Psoas muscle (tissue), 8 donors: ENCODE measurements at regions of chr15 and their contacts with region 1.

Region 1: GRCh38 chr15:41972253-41973242 is at the start of gene EHD4:
- DNase-seq: peak; percentile 97 to 98
- ATAC-seq: peak; percentile 95 to 97 (median 95)
- H3K4me3 ChIP-seq: peak within 1 kb of the TSS; percentile 87
- H3K27ac ChIP-seq: peak within 1 kb of the TSS; percentile 78
- H3K4me1 ChIP-seq: peaks cover 10% of the 10 kb centered on the region
- H3K27me3 ChIP-seq: no peaks in the 10 kb centered on the region
- CTCF ChIP-seq: peak; percentile 36
- total RNA-seq, gene EHD4: 5.3 to 9.6 (median 6.3) TPM

Region 2: DNA sequence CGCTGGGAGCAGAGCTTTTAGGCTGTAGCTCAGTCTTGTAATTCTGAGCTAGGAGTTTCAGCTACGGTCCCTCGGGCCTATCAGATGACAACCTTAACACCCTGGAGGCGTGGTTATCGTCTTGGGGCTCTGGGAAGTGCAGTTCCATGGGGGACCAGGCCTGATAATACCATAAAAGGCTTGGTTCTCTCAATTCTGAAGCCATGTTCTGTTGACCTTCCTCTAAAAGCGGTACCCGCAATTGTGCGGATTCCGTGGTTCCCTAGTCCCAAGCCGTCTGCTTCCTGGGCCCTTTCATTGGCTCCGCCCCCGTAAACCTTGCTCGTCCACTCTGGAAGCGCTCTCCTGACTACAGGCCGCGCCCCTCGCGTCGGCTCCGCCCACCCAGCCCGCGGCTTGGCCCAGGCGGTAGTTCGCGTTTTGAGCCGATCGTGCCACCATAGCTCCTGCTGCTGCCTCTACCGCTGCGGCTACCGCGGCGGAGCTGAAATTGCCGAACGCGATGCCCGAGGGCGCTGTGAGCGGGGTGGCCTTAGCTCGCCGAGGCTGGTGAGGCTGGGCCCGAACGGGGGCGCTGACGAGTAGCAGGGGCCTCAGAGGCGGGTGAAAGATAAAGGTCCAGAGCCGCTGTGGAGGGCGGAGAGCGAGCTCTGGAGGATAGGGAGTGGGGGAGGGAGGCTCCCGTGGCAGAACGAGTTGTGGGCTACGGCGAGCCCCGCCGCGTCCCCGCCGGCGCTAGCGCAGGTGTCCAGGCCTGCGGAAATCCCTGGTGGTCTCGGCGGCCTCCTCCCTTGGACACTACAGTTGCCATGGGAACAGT is 198.3 kb before region 1 on chr15 and contains the start of gene MAPKBP1:
- intact Hi-C with region 1: no loop called
- DNase-seq: peak; percentile 98 to 99
- ATAC-seq: peak; percentile 95 to 98 (median 98)
- H3K4me3 ChIP-seq: peak within 1 kb of the TSS; percentile 90
- H3K27ac ChIP-seq: peak within 1 kb of the TSS; percentile 86
- H3K4me1 ChIP-seq: peaks cover 35% of the 10 kb centered on the region
- H3K27me3 ChIP-seq: no peaks in the 10 kb centered on the region
- CTCF ChIP-seq: peak; percentile 57
- total RNA-seq, gene MAPKBP1: 7.1 to 10.3 (median 8.1) TPM

Region 3: DNA sequence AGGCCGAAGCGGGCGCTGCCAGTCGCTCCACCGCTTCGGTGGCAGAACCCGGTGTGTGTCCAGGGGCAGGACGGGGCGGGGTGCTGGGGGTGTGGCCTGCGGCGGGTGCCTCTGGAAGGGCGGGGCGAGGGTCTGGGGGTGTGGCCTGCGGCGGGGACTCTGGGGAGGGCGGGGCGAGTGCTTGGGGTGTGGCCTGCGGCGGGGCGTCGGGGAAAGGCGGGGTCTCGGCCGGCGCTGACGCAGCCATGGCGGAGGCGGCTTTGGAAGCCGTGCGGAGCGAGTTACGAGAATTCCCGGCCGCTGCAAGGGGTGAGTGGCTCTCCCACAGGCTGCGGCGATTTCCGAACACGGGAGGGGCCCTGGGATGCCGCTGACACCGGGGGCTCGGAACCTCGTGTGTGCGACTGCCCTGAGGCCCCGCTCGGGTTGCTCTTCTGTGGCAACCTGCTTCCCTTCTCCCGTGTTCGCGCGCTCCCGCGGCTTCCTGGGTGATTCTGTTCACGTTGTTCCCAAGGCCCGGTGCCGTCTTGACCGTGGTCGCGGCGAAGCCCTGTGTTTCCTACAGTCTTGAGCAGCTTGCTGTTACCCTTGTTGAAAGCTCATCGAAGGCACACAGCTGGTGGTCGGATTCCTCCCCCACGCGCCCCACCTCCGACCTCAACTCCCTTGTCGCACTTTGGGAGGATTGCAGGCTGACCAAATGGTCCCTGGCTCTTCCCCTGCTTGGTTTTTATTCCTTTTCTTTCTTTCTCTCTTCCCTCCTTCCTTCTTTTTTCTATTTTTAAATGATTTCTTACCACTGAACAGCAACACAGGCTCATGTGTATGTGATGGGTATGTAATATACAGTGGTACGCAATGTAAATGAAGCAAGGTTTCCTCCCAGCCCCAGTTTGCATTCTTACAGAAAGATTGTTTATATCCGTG is 144.4 kb before region 1 on chr15 and contains the start of gene JMJD7:
- intact Hi-C with region 1: loop called in 1 of 2 experiments (anchors 5 kb)
- DNase-seq: peak; percentile 96 to 98
- ATAC-seq: peak; percentile 96 to 97 (median 96)
- H3K4me3 ChIP-seq: peak within 1 kb of the TSS; percentile 93
- H3K27ac ChIP-seq: peak within 1 kb of the TSS; percentile 86
- H3K4me1 ChIP-seq: peaks cover 21% of the 10 kb centered on the region
- H3K27me3 ChIP-seq: no peaks in the 10 kb centered on the region
- CTCF ChIP-seq: no peak
- total RNA-seq, gene JMJD7: 5.8 to 8.0 (median 6.7) TPM

Region 4: GRCh38 chr15:41928637-41929620 is 43.6 kb before region 1 on chr15:
- intact Hi-C with region 1: loop called in 1 of 2 experiments (anchors 5 kb)
- DNase-seq: peak; percentile 49 to 75
- ATAC-seq: peak; percentile 77 to 85 (median 82)
- H3K4me3 ChIP-seq: no peak overlapping the region
- H3K27ac ChIP-seq: peak overlapping the region; percentile 61
- H3K4me1 ChIP-seq: peaks cover 47% of the 10 kb centered on the region
- H3K27me3 ChIP-seq: no peaks in the 10 kb centered on the region
- CTCF ChIP-seq: no peak

Region 5: DNA sequence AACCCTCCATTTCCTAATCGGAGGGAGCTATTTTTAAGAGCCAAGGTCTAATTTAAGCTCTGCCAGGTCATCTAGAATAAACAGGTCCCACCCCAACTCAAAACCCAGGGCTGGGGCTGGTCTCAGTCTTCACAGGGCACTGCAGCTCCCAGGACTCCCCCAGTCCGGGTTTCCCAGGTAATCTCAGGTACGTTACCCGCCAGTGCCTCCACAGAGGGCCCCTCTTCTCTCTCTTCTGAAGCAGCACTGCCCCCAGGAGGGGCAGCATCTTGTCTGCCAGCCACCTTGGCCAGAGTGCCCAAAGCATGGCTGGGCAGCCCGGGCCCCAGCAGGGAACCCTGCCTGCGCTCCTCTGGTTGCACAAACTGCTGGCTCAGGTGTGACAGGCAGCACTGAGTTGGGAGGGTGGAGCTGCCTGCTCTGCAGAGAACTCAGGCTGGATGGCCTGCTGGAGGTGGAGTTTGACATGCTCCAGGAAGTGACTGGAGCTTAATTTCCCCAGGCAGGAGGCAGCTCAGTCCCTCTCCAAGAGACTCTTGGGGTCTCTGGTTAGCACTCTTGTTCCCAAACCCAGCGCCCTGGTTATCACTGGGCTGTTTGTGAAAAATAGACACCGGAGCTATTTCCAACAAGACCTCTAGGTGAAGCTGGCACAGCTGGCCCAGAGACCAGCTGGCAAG is 183.8 kb after region 1 on chr15 and contains the start of gene PLA2G4F:
- intact Hi-C with region 1: no loop called
- DNase-seq: peak in 1 of 2 donors; percentile 79
- ATAC-seq: peak; percentile 47 to 73 (median 62)
- H3K4me3 ChIP-seq: peak within 1 kb of the TSS; percentile 52
- H3K27ac ChIP-seq: peak within 1 kb of the TSS; percentile 89
- H3K4me1 ChIP-seq: peaks cover 47% of the 10 kb centered on the region
- H3K27me3 ChIP-seq: no peaks in the 10 kb centered on the region
- CTCF ChIP-seq: no peak
- total RNA-seq, gene PLA2G4F: 1.9 to 5.3 (median 3.6) TPM